B cell (primary cell): ENCODE measurements at regions of chr14 and their contacts with region 1.

Region 1: GRCh38 chr14:77097700-77098528 is at the start of gene CIPC:
- DNase-seq: peak; percentile 99
- ATAC-seq: peak; percentile 85
- H3K4me3 ChIP-seq: peak within 1 kb of the TSS; percentile 85 to 99 (median 99)
- H3K4me3 Mint-ChIP-seq: peak within 1 kb of the TSS; percentile 86
- H3K27ac ChIP-seq: peak within 1 kb of the TSS; percentile 92 to 99
- H3K27ac Mint-ChIP-seq: peak within 1 kb of the TSS; percentile 96
- H3K4me1 ChIP-seq: peaks cover 45 to 51% of the 10 kb centered on the region in 2 donors
- H3K4me1 Mint-ChIP-seq: peaks cover 66% of the 10 kb centered on the region
- H3K27me3 ChIP-seq: no peaks in the 10 kb centered on the region
- H3K27me3 Mint-ChIP-seq: no peaks in the 10 kb centered on the region
- CTCF ChIP-seq: no peak
- total RNA-seq, gene CIPC: 46.8 and 47.0 TPM in 2 replicates

Region 2: DNA sequence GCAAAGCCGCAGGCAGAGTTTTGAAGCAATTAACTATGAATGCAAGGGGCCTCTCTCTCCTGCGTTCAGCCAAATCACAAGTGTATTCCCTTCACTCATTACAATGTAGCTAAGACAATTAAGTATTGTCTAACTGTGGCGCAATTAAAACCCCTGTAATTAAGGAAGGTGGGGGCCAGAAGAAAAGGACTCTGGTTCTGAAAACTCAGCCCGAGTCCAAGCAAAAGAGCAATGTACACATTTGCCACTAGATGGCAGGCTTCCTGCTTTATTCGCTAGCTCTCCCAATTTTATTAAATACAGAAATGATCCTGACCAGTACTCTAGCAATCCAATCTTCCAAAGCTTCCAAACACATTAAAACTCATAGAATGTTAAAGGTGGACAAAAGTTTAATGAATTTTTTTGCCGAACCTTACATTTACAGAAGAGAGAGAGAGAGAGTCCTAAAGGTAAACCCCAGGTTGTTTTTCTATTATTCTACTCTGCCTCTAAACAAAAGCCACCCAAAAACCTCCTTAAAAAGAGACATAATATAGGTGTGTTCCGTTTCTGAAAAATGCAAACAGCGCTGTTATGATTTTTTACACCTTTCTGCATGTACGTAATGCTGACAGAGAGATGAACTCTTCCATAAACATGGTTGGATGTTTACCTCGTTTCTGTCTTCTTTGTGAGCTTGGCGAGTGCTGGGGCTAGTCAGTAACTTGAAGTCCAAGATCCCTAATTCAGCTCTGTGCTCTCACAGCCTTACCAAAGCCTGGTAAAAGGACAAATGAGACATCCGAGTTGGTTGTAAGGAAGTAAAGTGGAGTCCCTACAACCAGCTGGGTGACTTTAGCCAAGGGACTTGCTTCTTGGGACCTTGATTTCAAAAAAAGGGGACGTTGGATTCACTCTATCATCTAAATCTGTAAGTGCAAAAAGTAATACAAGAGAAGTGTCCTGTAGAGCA is 387.6 kb before region 1 on chr14:
- CTCF ChIA-PET with region 1: interaction called, 14 read pairs
- POLR2A ChIA-PET with region 1: no interaction called
- intact Hi-C with region 1: loop called (anchors 1 kb)
- DNase-seq: peak; percentile 49
- ATAC-seq: no peak
- H3K4me3 ChIP-seq: no peak overlapping the region
- H3K4me3 Mint-ChIP-seq: no peak overlapping the region
- H3K27ac ChIP-seq: no peak overlapping the region
- H3K27ac Mint-ChIP-seq: no peak overlapping the region
- H3K4me1 ChIP-seq: peaks cover 0 to under 1% of the 10 kb centered on the region in 2 donors
- H3K4me1 Mint-ChIP-seq: no peaks in the 10 kb centered on the region
- H3K27me3 ChIP-seq: no peaks in the 10 kb centered on the region
- H3K27me3 Mint-ChIP-seq: peaks cover 15% of the 10 kb centered on the region
- CTCF ChIP-seq: peak; percentile 81

Region 3: GRCh38 chr14:77028384-77029231 is 69.3 kb before region 1 on chr14 and contains the start of gene IRF2BPL:
- CTCF ChIA-PET with region 1: interaction called, 4 read pairs
- POLR2A ChIA-PET with region 1: interaction called, 4 read pairs
- intact Hi-C with region 1: loop called (anchors 1 kb)
- DNase-seq: peak; percentile 97
- ATAC-seq: peak; percentile 70
- H3K4me3 ChIP-seq: peak within 1 kb of the TSS; percentile 11 to 95 (median 82)
- H3K4me3 Mint-ChIP-seq: peak within 1 kb of the TSS; percentile 92
- H3K27ac ChIP-seq: peak within 1 kb of the TSS; percentile 96 to 98
- H3K27ac Mint-ChIP-seq: peak within 1 kb of the TSS; percentile 99
- H3K4me1 ChIP-seq: peaks cover 39 to 47% of the 10 kb centered on the region in 2 donors
- H3K4me1 Mint-ChIP-seq: peaks cover 46% of the 10 kb centered on the region
- H3K27me3 ChIP-seq: no peaks in the 10 kb centered on the region
- H3K27me3 Mint-ChIP-seq: no peaks in the 10 kb centered on the region
- CTCF ChIP-seq: no peak
- total RNA-seq, gene IRF2BPL: 32.8 and 34.0 TPM in 2 replicates

Region 4: DNA sequence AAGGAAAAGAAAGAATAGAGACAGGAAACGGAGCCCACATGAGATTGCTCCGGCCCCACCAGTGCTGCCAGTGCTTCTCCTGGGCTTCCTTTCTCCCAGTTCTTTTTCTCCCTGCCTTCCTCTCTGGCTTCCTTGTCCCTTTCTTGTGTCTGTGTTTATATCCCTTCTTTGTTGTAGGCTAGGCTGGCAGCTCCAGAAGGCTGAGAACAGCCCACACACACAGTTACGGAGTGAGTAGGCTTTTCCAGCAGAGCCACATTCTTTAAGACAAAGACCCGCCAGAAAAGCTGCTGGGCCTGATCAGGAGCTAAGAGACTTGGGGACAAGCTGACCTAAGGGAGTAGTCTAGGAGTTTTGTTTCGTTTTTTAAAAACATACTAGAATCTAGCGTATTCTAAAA is 13.1 kb after region 1 on chr14:
- CTCF ChIA-PET with region 1: interaction called, 757 read pairs
- POLR2A ChIA-PET with region 1: interaction called, 5 read pairs
- intact Hi-C with region 1: loop called (anchors 1 kb)
- DNase-seq: no peak
- ATAC-seq: no peak
- H3K4me3 ChIP-seq: no peak overlapping the region
- H3K4me3 Mint-ChIP-seq: no peak overlapping the region
- H3K27ac ChIP-seq: no peak overlapping the region
- H3K27ac Mint-ChIP-seq: peak overlapping the region; percentile 26
- H3K4me1 ChIP-seq: peaks cover 4 to 5% of the 10 kb centered on the region in 2 donors
- H3K4me1 Mint-ChIP-seq: peaks cover 25% of the 10 kb centered on the region
- H3K27me3 ChIP-seq: no peaks in the 10 kb centered on the region
- H3K27me3 Mint-ChIP-seq: no peaks in the 10 kb centered on the region
- CTCF ChIP-seq: no peak

Region 5: GRCh38 chr14:77314043-77314442 is 216.1 kb after region 1 on chr14:
- CTCF ChIA-PET with region 1: interaction called, 14 read pairs
- POLR2A ChIA-PET with region 1: no interaction called
- intact Hi-C with region 1: no loop called
- DNase-seq: no peak
- ATAC-seq: no peak
- H3K4me3 ChIP-seq: no peak overlapping the region
- H3K4me3 Mint-ChIP-seq: no peak overlapping the region
- H3K27ac ChIP-seq: no peak overlapping the region
- H3K27ac Mint-ChIP-seq: no peak overlapping the region
- H3K4me1 ChIP-seq: peaks cover 4 to 9% of the 10 kb centered on the region in 2 donors
- H3K4me1 Mint-ChIP-seq: peaks cover 4% of the 10 kb centered on the region
- H3K27me3 ChIP-seq: no peaks in the 10 kb centered on the region
- H3K27me3 Mint-ChIP-seq: no peaks in the 10 kb centered on the region
- CTCF ChIP-seq: no peak

Region 6: GRCh38 chr14:77547512-77548180 is 449.7 kb after region 1 on chr14:
- CTCF ChIA-PET with region 1: no interaction called
- POLR2A ChIA-PET with region 1: no interaction called
- intact Hi-C with region 1: no loop called
- DNase-seq: no peak
- ATAC-seq: no peak
- H3K4me3 ChIP-seq: no peak overlapping the region
- H3K4me3 Mint-ChIP-seq: no peak overlapping the region
- H3K27ac ChIP-seq: no peak overlapping the region
- H3K27ac Mint-ChIP-seq: no peak overlapping the region
- H3K4me1 ChIP-seq: peaks cover 11 to 14% of the 10 kb centered on the region in 2 donors
- H3K4me1 Mint-ChIP-seq: peaks cover 13% of the 10 kb centered on the region
- H3K27me3 ChIP-seq: no peaks in the 10 kb centered on the region
- H3K27me3 Mint-ChIP-seq: no peaks in the 10 kb centered on the region
- CTCF ChIP-seq: peak; percentile 10

Region 7: DNA sequence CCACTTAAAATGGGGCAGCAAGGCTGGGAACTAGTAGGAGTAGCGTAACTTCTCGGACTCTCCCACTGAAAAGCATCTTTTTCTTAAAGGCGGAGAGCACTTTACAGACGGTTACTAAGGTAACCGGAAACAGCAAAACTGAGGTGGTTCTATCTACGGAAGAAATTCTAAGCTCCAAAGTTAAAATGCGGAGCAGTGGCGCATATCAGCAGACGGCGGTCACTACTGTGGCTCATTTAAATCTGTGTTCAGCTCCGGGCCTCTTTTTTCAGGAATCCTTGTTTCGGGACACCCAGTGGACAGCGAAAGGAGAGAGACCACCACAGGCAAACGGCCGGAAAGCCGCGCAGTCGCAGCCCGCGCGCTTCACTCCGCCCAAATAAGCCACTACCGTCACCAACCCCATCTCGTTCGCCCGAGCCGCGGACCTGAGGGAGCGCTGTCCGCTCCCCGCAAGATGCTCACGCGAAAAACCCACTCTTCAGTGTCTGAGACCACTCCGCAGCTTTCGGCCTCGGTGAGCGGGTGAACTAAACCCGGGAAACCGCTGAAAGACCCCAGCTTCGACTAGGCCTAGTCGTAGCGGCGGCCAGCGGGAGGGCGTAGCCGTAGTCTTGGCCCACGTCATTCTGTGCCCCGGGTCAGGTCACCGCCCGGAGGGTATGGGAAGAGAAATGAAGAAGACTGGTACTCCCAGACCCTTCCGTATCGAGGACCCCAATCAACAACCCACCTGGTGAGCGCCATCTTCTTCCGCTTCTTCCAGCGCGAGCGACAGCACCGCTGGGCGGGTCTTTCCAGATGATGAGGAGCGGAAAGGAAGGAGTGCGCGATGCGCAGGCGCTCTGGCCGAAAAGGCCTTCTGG is 662.7 kb after region 1 on chr14 and contains the start of gene SNW1:
- CTCF ChIA-PET with region 1: no interaction called
- POLR2A ChIA-PET with region 1: no interaction called
- intact Hi-C with region 1: loop called (anchors 2 kb)
- DNase-seq: peak; percentile 95
- ATAC-seq: peak; percentile 94
- H3K4me3 ChIP-seq: peak within 1 kb of the TSS; percentile 82 to 98 (median 92)
- H3K4me3 Mint-ChIP-seq: peak within 1 kb of the TSS; percentile 97
- H3K27ac ChIP-seq: peak within 1 kb of the TSS; percentile 97
- H3K27ac Mint-ChIP-seq: peak within 1 kb of the TSS; percentile 97
- H3K4me1 ChIP-seq: peaks cover 23 to 24% of the 10 kb centered on the region in 2 donors
- H3K4me1 Mint-ChIP-seq: peaks cover 36% of the 10 kb centered on the region
- H3K27me3 ChIP-seq: no peaks in the 10 kb centered on the region
- H3K27me3 Mint-ChIP-seq: no peaks in the 10 kb centered on the region
- CTCF ChIP-seq: no peak
- total RNA-seq, gene SNW1: 86.4 and 99.3 TPM in 2 replicates